ENCODE measurements at regions of chr15 and their contacts with region 1.

Region 1: GRCh38 chr15:49046220-49047102 is at the start of gene SECISBP2L:
- DNase-seq: peak; percentile 96
- ATAC-seq: peak; percentile 96
- H3K4me3 ChIP-seq: peak within 1 kb of the TSS; percentile 78 to 98 (median 80)
- H3K4me3 Mint-ChIP-seq: peak within 1 kb of the TSS; percentile 95
- H3K27ac ChIP-seq: peak within 1 kb of the TSS; percentile 83 to 89
- H3K27ac Mint-ChIP-seq: peak within 1 kb of the TSS; percentile 98
- H3K4me1 ChIP-seq: peaks cover 12 to 19% of the 10 kb centered on the region in 2 donors
- H3K4me1 Mint-ChIP-seq: peaks cover 32% of the 10 kb centered on the region
- H3K27me3 ChIP-seq: no peaks in the 10 kb centered on the region
- H3K27me3 Mint-ChIP-seq: no peaks in the 10 kb centered on the region
- CTCF ChIP-seq: peak; percentile 45
- total RNA-seq, gene SECISBP2L: 117 and 121 TPM in 2 replicates

Region 2: GRCh38 chr15:48330855-48331795 is 715.3 kb before region 1 on chr15 and contains the start of gene DUT:
- CTCF ChIA-PET with region 1: no interaction called
- POLR2A ChIA-PET with region 1: no interaction called
- intact Hi-C with region 1: loop called (anchors 2 kb)
- DNase-seq: peak; percentile 89
- ATAC-seq: peak; percentile 78
- H3K4me3 ChIP-seq: peak within 1 kb of the TSS; percentile 76 to 90 (median 77)
- H3K4me3 Mint-ChIP-seq: peak within 1 kb of the TSS; percentile 94
- H3K27ac ChIP-seq: peak within 1 kb of the TSS; percentile 83 to 90
- H3K27ac Mint-ChIP-seq: peak within 1 kb of the TSS; percentile 95
- H3K4me1 ChIP-seq: peaks cover 15 to 17% of the 10 kb centered on the region in 2 donors
- H3K4me1 Mint-ChIP-seq: peaks cover 25% of the 10 kb centered on the region
- H3K27me3 ChIP-seq: no peaks in the 10 kb centered on the region
- H3K27me3 Mint-ChIP-seq: no peaks in the 10 kb centered on the region
- CTCF ChIP-seq: no peak
- total RNA-seq, gene DUT: 84.7 and 89.8 TPM in 2 replicates

Region 3: DNA sequence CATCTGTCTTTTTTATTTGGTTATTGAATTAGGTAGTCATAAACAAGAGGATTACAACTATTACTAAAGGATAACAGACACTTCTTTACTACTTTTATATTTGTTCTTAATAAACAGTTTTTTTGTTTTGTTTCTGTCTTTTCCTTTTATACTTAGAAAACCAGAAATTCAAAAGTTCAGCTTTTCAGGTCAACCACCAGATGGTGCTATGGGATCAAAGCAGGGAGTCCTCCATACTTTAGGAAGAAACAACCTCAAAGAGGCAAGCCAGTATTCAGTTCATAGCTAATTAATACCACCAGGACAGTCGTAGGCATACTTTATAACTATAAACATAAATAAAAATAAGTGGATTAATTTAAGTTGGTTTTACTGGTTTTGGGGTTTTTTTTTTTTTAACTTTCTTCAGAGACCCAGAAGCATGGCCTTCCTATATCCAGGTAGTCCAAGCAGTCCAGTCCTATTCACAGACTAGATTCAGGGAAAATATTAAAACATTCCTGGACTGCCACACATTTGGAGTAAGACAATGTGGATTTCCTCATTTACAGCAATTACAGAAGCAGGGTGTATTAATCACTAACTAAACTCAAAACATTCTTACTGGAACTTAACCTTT is 184.5 kb before region 1 on chr15:
- CTCF ChIA-PET with region 1: no interaction called
- POLR2A ChIA-PET with region 1: no interaction called
- intact Hi-C with region 1: loop called (anchors 5 kb)
- DNase-seq: peak; percentile 71
- ATAC-seq: peak; percentile 58
- H3K4me3 ChIP-seq: no peak overlapping the region
- H3K4me3 Mint-ChIP-seq: no peak overlapping the region
- H3K27ac ChIP-seq: no peak overlapping the region
- H3K27ac Mint-ChIP-seq: no peak overlapping the region
- H3K4me1 ChIP-seq: no peaks in the 10 kb centered on the region
- H3K4me1 Mint-ChIP-seq: no peaks in the 10 kb centered on the region
- H3K27me3 ChIP-seq: no peaks in the 10 kb centered on the region
- H3K27me3 Mint-ChIP-seq: peaks cover 17% of the 10 kb centered on the region
- CTCF ChIP-seq: peak; percentile 94

Region 4: GRCh38 chr15:49110158-49110944 is 63.9 kb after region 1 on chr15:
- CTCF ChIA-PET with region 1: no interaction called
- POLR2A ChIA-PET with region 1: no interaction called
- intact Hi-C with region 1: loop called (anchors 5 kb)
- DNase-seq: no peak
- ATAC-seq: no peak
- H3K4me3 ChIP-seq: no peak overlapping the region
- H3K4me3 Mint-ChIP-seq: no peak overlapping the region
- H3K27ac ChIP-seq: no peak overlapping the region
- H3K27ac Mint-ChIP-seq: no peak overlapping the region
- H3K4me1 ChIP-seq: no peaks in the 10 kb centered on the region
- H3K4me1 Mint-ChIP-seq: no peaks in the 10 kb centered on the region
- H3K27me3 ChIP-seq: no peaks in the 10 kb centered on the region
- H3K27me3 Mint-ChIP-seq: no peaks in the 10 kb centered on the region
- CTCF ChIP-seq: no peak

Region 5: DNA sequence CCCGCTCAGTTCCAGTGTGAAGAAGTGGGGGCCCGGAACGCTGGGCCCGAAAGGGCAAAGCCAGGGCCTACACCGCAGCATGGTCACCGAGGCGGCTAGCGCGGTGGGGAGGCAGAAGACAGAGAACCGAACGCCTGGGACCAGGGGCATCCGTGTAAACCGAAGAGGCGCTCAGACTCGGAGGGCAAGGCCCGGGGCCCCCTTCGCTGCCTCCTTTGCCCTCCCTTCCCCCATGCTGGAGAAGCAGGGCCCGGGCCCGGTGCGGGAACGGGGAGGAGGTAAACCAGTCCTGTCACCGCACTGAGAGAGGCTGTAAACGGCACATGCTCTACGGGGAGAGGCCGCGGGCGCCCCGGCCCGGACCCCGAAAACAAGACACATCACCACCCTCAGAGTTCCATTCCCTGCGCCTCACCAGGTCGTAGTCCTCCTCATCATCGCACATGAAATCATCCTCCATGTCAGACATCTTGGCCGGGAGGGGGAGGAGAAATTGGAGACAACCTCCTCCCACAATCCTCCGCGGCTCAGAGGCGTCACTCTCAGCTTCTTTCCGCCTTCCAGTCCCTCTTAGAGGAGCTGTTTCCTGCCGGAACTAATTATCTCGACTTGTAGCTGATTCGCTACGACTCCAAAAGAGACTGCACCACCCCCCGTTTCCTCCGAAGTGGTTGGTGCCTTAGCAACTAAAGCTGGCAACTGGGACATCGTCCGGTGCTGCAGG is 108.8 kb after region 1 on chr15 and contains the start of gene COPS2:
- CTCF ChIA-PET with region 1: interaction called, 10 read pairs
- POLR2A ChIA-PET with region 1: interaction called, 7 read pairs
- intact Hi-C with region 1: loop called (anchors 1 kb)
- DNase-seq: peak; percentile 97
- ATAC-seq: peak; percentile 93
- H3K4me3 ChIP-seq: peak within 1 kb of the TSS; percentile 80 to 99 (median 90)
- H3K4me3 Mint-ChIP-seq: peak within 1 kb of the TSS; percentile 98
- H3K27ac ChIP-seq: peak within 1 kb of the TSS; percentile 92 to 94
- H3K27ac Mint-ChIP-seq: peak within 1 kb of the TSS; percentile 96
- H3K4me1 ChIP-seq: peaks cover 11 to 25% of the 10 kb centered on the region in 2 donors
- H3K4me1 Mint-ChIP-seq: peaks cover 41% of the 10 kb centered on the region
- H3K27me3 ChIP-seq: no peaks in the 10 kb centered on the region
- H3K27me3 Mint-ChIP-seq: no peaks in the 10 kb centered on the region
- CTCF ChIP-seq: peak; percentile 9
- total RNA-seq, gene COPS2: 44.5 and 47.8 TPM in 2 replicates

Region 6: GRCh38 chr15:50686468-50687301 is 1640.2 kb after region 1 on chr15 and contains the start of gene TRPM7:
- CTCF ChIA-PET with region 1: no interaction called
- POLR2A ChIA-PET with region 1: no interaction called
- intact Hi-C with region 1: loop called (anchors 2 kb)
- DNase-seq: peak; percentile 97
- ATAC-seq: peak; percentile 81
- H3K4me3 ChIP-seq: peak within 1 kb of the TSS; percentile 74 to 100 (median 96)
- H3K4me3 Mint-ChIP-seq: peak within 1 kb of the TSS; percentile 100
- H3K27ac ChIP-seq: peak within 1 kb of the TSS; percentile 98 to 100
- H3K27ac Mint-ChIP-seq: peak within 1 kb of the TSS; percentile 99
- H3K4me1 ChIP-seq: peaks cover 19 to 24% of the 10 kb centered on the region in 2 donors
- H3K4me1 Mint-ChIP-seq: peaks cover 46% of the 10 kb centered on the region
- H3K27me3 ChIP-seq: no peaks in the 10 kb centered on the region
- H3K27me3 Mint-ChIP-seq: no peaks in the 10 kb centered on the region
- CTCF ChIP-seq: no peak
- total RNA-seq, gene TRPM7: 77.2 and 86.4 TPM in 2 replicates

Measured in B cell (primary cell).